Ascending aorta (tissue), 2 donors: ENCODE measurements at regions of chr14 and their contacts with region 1.

Region 1: GRCh38 chr14:54712465-54713200 is 145.7 kb downstream of the SAMD4A start:
- DNase-seq: peak in 1 of 2 donors; percentile 80
- H3K4me3 ChIP-seq: peak overlapping the region; percentile 16 to 32
- H3K27ac ChIP-seq: peak overlapping the region; percentile 85 to 91
- H3K4me1 ChIP-seq: peaks cover 10 to 72% of the 10 kb centered on the region in 2 donors
- H3K27me3 ChIP-seq: no peaks in the 10 kb centered on the region
- CTCF ChIP-seq: no peak

Region 2: DNA sequence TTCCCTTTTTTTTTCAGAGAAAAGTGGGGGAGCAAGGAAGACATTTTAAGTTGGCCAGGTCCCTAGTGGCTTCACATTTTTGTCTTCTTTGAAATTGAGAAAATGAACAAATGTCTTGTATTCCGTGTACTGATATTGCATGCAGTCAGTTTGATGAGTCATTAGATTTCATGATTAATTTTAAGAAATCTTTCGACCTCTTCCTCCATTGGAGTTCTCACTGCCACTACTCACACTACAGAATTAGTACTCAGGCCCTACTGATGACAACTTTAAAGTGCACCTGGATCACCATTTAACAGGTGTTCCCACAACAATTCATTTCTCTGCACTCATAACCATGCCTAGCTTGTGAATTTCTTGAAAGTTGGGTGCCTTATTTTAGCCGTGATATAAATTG is 95.2 kb before region 1 on chr14:
- intact Hi-C with region 1: no loop called
- DNase-seq: no peak
- H3K4me3 ChIP-seq: no peak overlapping the region
- H3K27ac ChIP-seq: no peak overlapping the region
- H3K4me1 ChIP-seq: peaks cover 0 to 12% of the 10 kb centered on the region in 2 donors
- H3K27me3 ChIP-seq: no peaks in the 10 kb centered on the region
- CTCF ChIP-seq: no peak

Region 3: DNA sequence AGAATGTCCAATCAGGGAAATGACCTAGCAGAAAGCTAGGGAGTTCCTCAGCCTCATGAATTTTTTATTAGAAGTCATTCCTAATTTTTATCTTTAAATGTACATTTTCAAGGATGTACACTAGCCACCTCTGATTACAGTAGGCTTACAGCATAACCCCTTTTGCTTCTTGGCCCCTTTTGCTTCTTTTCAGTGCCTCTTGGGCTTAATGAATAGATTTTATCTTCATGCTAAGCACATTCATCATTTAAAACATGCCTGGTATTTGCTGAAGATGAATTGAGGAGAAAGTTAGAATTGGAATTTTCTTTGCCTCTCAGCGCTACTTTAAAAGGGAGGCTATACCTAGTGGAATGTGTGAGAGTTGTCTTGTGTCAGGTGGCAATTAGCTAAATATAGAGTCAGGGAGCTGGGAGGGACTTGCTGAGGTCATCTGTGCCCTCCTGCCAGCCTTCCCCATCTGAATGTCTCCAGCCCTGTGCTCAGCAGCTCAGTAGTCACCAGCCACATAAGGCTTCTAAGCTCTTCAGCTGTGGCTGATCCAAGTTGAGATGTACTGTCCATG is 13.6 kb before region 1 on chr14:
- intact Hi-C with region 1: loop called (anchors 2 kb)
- DNase-seq: peak in 1 of 2 donors; percentile 81
- H3K4me3 ChIP-seq: no peak overlapping the region
- H3K27ac ChIP-seq: peak overlapping the region; percentile 66 to 77
- H3K4me1 ChIP-seq: peaks cover 8 to 55% of the 10 kb centered on the region in 2 donors
- H3K27me3 ChIP-seq: no peaks in the 10 kb centered on the region
- CTCF ChIP-seq: no peak

Region 4: GRCh38 chr14:54762296-54762695 is 49.7 kb after region 1 on chr14:
- intact Hi-C with region 1: loop called (anchors 10 kb)
- DNase-seq: no peak
- H3K4me3 ChIP-seq: no peak overlapping the region
- H3K27ac ChIP-seq: peak overlapping the region; percentile 62 to 67
- H3K4me1 ChIP-seq: peaks cover 2 to 4% of the 10 kb centered on the region in 2 donors
- H3K27me3 ChIP-seq: no peaks in the 10 kb centered on the region
- CTCF ChIP-seq: no peak